ENCODE measurements at regions of chr12 and their contacts with region 1.

Region 1: GRCh38 chr12:1093166-1093751 is 102.2 kb downstream of the ERC1 start:
- DNase-seq: peak; percentile 47
- H3K4me3 ChIP-seq: no peak overlapping the region
- H3K27ac ChIP-seq: no peak overlapping the region
- H3K4me1 ChIP-seq: no peaks in the 10 kb centered on the region
- H3K27me3 ChIP-seq: no peaks in the 10 kb centered on the region
- CTCF ChIP-seq: peak; percentile 95

Region 2: DNA sequence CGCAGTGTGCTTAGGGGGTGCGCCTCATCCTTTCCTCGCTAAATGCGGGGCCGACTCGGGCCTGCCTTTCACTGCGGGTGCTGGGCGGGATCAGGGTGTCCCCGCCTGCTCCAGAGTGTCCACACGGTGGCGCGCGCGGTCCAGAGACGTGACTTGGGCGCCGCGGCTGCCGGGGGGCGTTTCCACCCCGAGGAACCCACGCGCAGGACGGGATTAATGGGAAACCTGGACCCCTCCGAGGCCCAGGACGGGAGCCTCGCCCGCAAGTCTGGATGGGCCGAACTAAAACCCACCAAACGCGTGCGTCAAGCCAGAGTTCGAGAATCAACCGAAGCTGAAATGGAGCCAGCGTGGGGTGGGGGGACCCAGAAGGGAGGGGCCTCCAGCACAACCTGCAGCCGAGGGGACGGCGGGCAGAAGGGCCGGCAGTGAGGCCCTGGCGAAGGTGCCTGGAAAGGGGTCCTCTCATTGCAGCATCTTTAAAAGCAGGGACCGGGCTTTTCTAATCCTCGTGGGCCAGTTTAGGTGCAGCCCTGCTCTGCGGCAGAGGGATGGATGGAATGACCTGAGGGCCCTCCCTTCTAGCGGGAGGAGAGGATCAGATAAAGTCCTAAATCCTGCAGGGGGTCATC is 523.3 kb before region 1 on chr12:
- CTCF ChIA-PET with region 1: interaction called, 4 read pairs
- POLR2A ChIA-PET with region 1: interaction called, 3 read pairs
- intact Hi-C with region 1: loop called (anchors 5 kb)
- DNase-seq: peak; percentile 61 to 90
- H3K4me3 ChIP-seq: peak overlapping the region; percentile 77
- H3K27ac ChIP-seq: peak overlapping the region; percentile 84; the same call in 1 of the 2 replicates
- H3K4me1 ChIP-seq: peaks cover 25% of the 10 kb centered on the region
- H3K27me3 ChIP-seq: no peaks in the 10 kb centered on the region
- CTCF ChIP-seq: peak; percentile 94

Region 3: GRCh38 chr12:818733-819132 is 274.5 kb before region 1 on chr12:
- CTCF ChIA-PET with region 1: interaction called, 4 read pairs
- POLR2A ChIA-PET with region 1: no interaction called
- intact Hi-C with region 1: loop called (anchors 5 kb)
- DNase-seq: no peak
- H3K4me3 ChIP-seq: no peak overlapping the region
- H3K27ac ChIP-seq: no peak overlapping the region
- H3K4me1 ChIP-seq: peaks cover 17% of the 10 kb centered on the region
- H3K27me3 ChIP-seq: no peaks in the 10 kb centered on the region
- CTCF ChIP-seq: peak; percentile 20; the same call in 1 of the 2 replicates

Region 4: DNA sequence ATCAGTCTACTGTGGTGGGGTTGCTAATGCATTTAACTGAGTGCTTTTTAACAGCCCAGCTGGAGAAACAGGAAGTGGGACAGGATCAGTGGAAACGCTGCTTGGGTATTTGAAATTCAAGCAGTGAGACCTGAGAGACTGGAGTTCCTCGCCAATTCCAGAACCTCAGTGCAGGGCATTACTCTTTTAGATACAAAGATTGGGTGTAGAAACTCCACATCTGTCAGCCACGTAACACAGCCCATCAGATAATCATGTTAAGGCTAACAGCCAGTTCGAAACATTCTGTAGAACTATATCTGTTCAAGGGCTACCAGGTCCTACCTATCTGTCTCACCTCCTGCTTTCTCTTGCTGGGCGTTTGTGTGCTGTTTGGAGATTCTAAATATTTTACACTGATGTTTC is 189.2 kb before region 1 on chr12:
- CTCF ChIA-PET with region 1: interaction called, 17 read pairs
- POLR2A ChIA-PET with region 1: no interaction called
- intact Hi-C with region 1: no loop called
- DNase-seq: no peak
- H3K4me3 ChIP-seq: no peak overlapping the region
- H3K27ac ChIP-seq: no peak overlapping the region
- H3K4me1 ChIP-seq: no peaks in the 10 kb centered on the region
- H3K27me3 ChIP-seq: no peaks in the 10 kb centered on the region
- CTCF ChIP-seq: no peak

Region 5: GRCh38 chr12:913919-914708 is 179.1 kb before region 1 on chr12:
- CTCF ChIA-PET with region 1: interaction called, 5 read pairs
- POLR2A ChIA-PET with region 1: no interaction called
- intact Hi-C with region 1: loop called (anchors 5 kb)
- DNase-seq: peak in 1 of 2 experiments; percentile 40
- H3K4me3 ChIP-seq: no peak overlapping the region
- H3K27ac ChIP-seq: no peak overlapping the region
- H3K4me1 ChIP-seq: no peaks in the 10 kb centered on the region
- H3K27me3 ChIP-seq: no peaks in the 10 kb centered on the region
- CTCF ChIP-seq: no peak

Region 6: GRCh38 chr12:990661-991349 is 102.5 kb before region 1 on chr12 and contains the start of gene ERC1:
- CTCF ChIA-PET with region 1: no interaction called
- POLR2A ChIA-PET with region 1: interaction called, 3 read pairs
- intact Hi-C with region 1: loop called (anchors 10 kb)
- DNase-seq: peak; percentile 61 to 93
- H3K4me3 ChIP-seq: peak within 1 kb of the TSS; percentile 83
- H3K27ac ChIP-seq: peak within 1 kb of the TSS; percentile 72
- H3K4me1 ChIP-seq: peaks cover 34% of the 10 kb centered on the region
- H3K27me3 ChIP-seq: no peaks in the 10 kb centered on the region
- CTCF ChIP-seq: no peak
- total RNA-seq, gene ERC1: 47.2 and 52.0 TPM in 2 replicates